Activated CD4-positive, alpha-beta T cell treated with anti-CD3 and anti-CD28 coated beads for 36 hours (primary cell): ENCODE measurements at regions of chr20 and their contacts with region 1.

Region 1: GRCh38 chr20:2460752-2461424 is 9.7 kb downstream of the SNRPB start:
- DNase-seq: no peak
- ATAC-seq: peak; percentile 9
- H3K4me3 Mint-ChIP-seq: no peak overlapping the region
- H3K27ac Mint-ChIP-seq: no peak overlapping the region
- H3K4me1 Mint-ChIP-seq: peaks cover 48% of the 10 kb centered on the region
- H3K27me3 Mint-ChIP-seq: no peaks in the 10 kb centered on the region

Region 2: DNA sequence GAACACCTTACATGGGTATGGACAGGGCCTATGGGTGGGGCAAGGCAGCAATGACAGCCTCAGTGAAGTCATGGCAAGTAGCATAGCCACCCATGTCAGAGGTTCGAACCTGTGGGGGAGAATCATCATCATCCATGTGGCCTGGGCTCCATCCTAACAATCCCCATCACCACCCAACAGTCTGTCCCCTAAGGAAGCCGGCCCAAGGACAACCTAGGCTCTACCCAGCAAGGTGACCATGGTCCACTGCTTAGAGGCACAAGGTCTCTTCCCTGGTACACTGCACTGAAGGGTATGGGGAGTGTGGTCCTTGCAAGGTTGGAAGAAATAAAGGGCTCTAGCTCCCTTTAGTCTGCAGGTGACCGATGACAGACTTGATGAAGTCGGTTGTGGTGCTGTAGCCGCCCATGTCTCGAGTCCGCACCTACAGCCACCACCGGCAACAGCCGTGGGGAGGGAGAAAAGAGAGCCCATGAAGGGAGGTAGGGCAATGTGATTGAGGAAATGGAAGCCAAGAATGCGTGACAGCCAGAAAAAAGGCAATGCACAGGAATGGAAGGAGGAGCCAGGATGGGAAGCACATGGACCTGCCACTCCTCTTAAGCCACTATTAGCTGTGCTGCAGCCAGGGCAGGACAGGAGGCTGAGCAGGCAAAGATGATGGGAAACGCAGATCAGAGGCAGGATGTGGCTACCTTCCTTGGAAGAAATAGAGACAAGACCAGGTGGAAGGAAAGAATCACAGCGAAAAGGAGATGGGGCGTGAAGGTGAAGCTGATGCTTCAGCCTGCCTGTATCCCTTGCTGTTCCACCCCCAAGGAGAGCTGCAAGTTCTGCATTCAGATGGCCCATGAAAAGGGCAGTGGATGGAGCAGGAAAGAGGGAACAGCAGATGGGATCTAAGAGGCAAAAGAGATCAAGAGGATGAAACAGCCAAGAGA is 197.8 kb after region 1 on chr20:
- CTCF ChIA-PET with region 1: no interaction called
- POLR2A ChIA-PET with region 1: interaction called, 11 read pairs
- intact Hi-C with region 1: no loop called
- DNase-seq: peak; percentile 37
- ATAC-seq: peak; percentile 37
- H3K4me3 Mint-ChIP-seq: no peak overlapping the region
- H3K27ac Mint-ChIP-seq: peak overlapping the region; percentile 34
- H3K4me1 Mint-ChIP-seq: peaks cover 46% of the 10 kb centered on the region
- H3K27me3 Mint-ChIP-seq: no peaks in the 10 kb centered on the region